ENCODE measurements at regions of chr9 and their contacts with region 1.

Region 1: GRCh38 chr9:93962561-93963440 is 7.6 kb upstream of the BARX1 start:
- DNase-seq: peak; percentile 82
- ATAC-seq: peak; percentile 82 to 86

Region 2: DNA sequence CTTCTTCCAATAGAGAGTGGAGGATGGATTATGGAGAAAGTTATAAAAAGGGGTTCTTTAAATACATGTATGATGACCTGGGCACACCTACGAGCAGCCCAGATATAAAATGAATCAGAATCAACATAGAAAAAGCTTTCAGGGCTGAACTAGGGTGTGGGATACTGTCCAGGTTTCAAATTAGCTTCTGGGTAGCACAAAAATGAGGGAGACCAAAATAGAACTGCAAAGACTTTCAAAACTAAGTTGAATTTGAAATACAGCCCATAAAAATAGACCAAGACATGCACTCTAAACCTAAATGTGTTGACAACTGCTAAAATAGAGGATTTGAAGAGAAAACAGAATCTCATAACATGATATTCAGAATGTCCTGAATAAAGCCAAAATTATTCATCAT is 1101.9 kb before region 1 on chr9:
- intact Hi-C with region 1: no loop called
- DNase-seq: no peak
- ATAC-seq: no peak

Region 3: GRCh38 chr9:93041108-93041802 is 921.5 kb before region 1 on chr9:
- intact Hi-C with region 1: no loop called
- DNase-seq: no peak
- ATAC-seq: no peak

Region 4: GRCh38 chr9:93682232-93682968 is 280.4 kb before region 1 on chr9:
- intact Hi-C with region 1: loop called (anchors 1 to 2 kb)
- DNase-seq: peak; percentile 62
- ATAC-seq: peak; percentile 40 to 65

Region 5: DNA sequence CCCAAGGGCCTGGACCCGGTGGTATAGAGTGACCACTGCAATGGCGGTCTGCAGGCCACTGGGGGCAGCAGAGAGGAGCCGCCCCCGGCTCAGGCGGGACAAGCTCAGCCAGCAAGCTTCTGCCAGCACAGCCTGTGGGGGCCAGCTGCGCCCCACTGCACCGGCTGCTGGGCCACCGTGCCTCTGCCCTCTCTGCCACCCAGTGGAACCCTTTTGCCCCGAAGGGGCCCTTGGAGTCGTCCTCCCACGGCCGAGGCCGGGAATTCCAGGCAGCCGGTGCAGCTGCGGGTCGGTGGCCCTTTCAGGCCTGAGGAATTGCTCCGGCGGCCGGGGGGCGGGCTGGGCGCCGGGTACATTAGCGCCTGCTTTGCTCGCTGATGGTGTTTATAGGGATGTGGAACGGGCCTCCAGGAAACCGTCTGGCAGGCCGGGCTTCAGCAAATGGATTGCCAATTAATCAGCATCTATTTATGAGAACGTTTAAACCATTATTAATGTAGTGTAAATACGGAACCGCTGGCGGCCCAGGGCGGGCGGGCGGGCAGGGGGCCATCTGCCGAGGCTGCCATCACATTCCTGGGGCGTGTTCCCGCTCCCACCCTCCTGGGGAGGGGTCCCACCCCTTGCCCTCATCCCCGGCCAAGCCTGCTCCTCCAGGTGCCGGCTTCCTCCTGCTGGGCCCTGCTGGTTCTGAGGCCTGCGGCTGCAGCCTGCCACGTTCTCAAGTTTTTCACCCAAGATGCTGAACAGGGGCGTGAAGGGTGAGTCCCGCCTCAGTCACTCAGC is 135.1 kb before region 1 on chr9:
- intact Hi-C with region 1: loop called (anchors 5 to 10 kb)
- DNase-seq: peak; percentile 53
- ATAC-seq: peak; percentile 91 to 95

Region 6: GRCh38 chr9:94300548-94301301 is 337.9 kb after region 1 on chr9:
- intact Hi-C with region 1: no loop called
- DNase-seq: no peak
- ATAC-seq: peak in 1 of 2 donors; percentile 57